ENCODE measurements at regions of chr16 and their contacts with region 1.

Region 1: GRCh38 chr16:85626191-85626981 is 13.3 kb downstream of the GSE1 start:
- DNase-seq: no peak
- ATAC-seq: no peak
- H3K4me3 Mint-ChIP-seq: no peak overlapping the region
- H3K27ac Mint-ChIP-seq: no peak overlapping the region
- H3K4me1 Mint-ChIP-seq: peaks cover 38% of the 10 kb centered on the region
- H3K27me3 Mint-ChIP-seq: no peaks in the 10 kb centered on the region
- CTCF ChIP-seq: no peak

Region 2: DNA sequence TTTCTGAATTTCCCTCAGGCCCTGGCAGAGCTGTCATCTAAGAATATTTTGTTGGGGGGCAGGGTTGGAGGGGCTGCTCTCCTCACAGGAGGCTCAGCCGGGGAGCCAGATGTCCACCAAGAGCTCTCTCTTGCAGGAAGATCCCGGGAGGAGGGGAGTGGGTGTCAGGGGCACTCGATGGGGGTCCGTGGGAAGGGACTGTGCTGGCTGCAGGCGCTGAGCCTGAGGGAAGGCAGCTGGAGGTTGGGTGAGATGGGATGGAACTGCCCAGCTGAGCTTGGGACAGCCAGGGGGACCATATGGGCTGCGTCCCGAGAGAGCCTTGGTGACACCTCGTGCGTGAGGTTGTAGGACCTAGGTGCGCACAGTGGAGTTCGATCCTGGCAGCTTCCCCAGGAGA is 124.5 kb before region 1 on chr16:
- CTCF ChIA-PET with region 1: no interaction called
- POLR2A ChIA-PET with region 1: interaction called, 10 read pairs
- intact Hi-C with region 1: no loop called
- DNase-seq: no peak
- ATAC-seq: no peak
- H3K4me3 Mint-ChIP-seq: no peak overlapping the region
- H3K27ac Mint-ChIP-seq: no peak overlapping the region
- H3K4me1 Mint-ChIP-seq: peaks cover 10% of the 10 kb centered on the region
- H3K27me3 Mint-ChIP-seq: peaks cover 4% of the 10 kb centered on the region
- CTCF ChIP-seq: no peak

Region 3: GRCh38 chr16:85514595-85515318 is 111.6 kb before region 1 on chr16:
- CTCF ChIA-PET with region 1: no interaction called
- POLR2A ChIA-PET with region 1: no interaction called
- intact Hi-C with region 1: no loop called
- DNase-seq: no peak
- ATAC-seq: no peak
- H3K4me3 Mint-ChIP-seq: no peak overlapping the region
- H3K27ac Mint-ChIP-seq: no peak overlapping the region
- H3K4me1 Mint-ChIP-seq: no peaks in the 10 kb centered on the region
- H3K27me3 Mint-ChIP-seq: peaks cover 10% of the 10 kb centered on the region
- CTCF ChIP-seq: no peak

Measured in activated B cell treated with CpG ODN at 0.5 μM for 24 hours (primary cell).